Right ventricle myocardium superior (tissue), 1 donor: ENCODE measurements at regions of chr2 and their contacts with region 1.

Region 1: GRCh38 chr2:74482801-74483674 is at the starts of genes CCDC142 and TTC31:
- DNase-seq: peak; percentile 97
- ATAC-seq: peak; percentile 99
- total RNA-seq, gene CCDC142: 7.2 TPM
- total RNA-seq, gene TTC31: 8.4 TPM

Region 2: DNA sequence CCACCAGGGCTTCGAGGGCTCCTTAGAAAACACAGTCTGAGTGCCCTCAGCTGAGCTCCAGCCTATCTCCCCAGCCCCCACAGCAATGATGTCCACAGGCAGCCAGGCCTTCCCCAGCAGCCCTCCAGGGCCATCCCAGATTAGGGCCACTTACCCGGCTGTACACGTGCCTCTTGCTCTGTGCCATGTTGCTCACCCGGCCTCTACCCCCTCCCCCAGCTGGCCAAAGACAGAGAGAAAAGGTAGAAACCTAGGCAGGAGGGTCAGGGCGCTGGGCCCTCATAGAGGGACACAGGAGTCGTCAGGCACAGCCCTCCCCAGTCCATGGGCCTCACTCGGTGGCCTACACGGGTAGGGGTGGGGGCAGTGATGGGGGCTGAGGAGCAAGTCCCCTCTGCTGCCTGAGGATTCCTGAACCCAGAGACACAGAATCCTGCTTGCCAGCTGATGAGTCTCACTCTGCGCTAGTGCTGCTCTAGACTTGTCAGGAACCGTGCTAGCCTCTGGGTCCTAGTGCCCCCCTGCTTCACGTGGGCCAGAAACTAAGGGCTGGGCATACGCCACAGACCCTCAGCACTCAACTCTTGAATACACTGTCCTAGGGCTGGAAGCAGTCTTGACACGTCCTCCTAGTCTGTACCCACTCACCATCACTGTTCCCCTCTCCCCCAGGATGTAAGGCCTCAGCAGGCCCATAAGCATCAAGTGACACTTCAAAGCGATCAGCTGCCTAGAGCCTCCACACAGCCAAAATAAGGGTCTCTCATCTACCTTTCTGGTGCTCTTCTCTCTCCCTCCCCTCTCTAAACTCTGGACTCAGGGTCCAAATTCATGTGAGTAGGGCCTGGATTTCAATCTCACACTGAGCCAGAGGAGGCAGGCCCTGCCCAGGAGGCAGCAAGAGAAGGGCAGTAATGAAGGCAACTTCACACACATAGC is 102.9 kb before region 1 on chr2 and contains the start of gene DCTN1:
- intact Hi-C with region 1: no loop called
- DNase-seq: peak; percentile 63
- ATAC-seq: peak; percentile 81
- total RNA-seq, gene DCTN1: 149 TPM

Region 3: DNA sequence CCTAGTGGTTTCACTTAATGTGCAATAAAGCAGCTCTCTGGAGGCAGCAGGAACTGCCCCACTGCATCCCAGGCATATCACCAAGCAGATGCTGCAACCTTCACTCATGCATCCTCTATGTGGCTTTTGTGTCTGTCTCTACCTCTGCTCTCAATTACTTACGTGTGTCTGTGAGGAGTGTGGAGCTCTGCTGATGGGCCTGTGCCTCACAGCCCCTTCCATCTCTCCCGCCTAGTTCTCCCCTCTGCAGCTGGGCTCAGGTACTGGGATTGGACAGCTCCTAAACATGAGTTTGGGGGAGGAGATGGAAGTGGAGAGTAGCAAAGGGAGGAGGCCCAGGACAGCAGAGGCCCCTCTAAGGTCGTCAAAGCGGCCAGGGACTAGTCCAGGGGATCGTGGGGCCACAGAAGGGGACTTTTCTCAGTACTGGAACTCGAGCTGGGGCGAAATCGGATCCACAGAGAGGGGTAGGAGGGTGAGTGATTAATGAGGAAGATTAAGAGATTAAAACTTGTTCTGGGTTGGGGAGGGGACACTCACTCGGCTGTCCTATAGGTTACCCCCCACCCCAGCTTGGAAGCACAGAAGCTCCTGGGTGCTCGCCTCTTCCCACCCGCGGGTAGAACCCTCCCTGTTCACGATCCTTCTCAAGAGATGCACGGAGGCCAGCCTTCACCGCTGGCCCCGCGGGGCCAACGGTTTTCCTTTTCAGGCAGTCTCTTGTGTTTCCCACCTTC is 18.5 kb after region 1 on chr2:
- intact Hi-C with region 1: loop called (anchors 2 kb)
- DNase-seq: no peak
- ATAC-seq: no peak

Region 4: DNA sequence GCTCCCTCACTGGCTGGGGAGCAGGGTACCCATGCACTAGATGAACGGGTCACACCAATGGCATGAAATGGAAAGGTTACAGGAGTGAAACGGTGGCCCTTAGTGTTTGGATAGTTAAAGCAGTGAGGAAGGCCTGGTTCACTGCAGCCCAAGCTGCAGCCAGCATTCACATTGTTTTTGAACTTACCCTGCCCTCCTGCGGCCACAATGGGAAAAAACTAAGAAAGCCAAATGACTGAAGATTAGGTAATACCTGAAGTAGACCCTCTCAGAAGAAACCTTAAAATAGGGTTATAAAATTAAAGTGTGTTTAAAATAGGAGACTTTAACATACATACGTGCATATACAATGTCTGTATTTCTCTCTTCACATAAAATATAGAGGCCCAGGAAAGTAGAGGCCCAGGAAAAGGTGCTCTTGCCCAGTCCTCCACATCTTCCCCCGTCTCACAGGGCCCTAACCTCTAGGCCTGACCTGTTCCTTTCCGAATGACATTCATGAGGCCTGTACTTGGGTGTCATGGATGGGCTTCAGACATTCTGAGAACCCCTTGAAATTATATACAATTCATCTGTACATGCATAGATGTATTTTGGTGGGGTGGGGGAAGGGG is 104.7 kb after region 1 on chr2:
- intact Hi-C with region 1: loop called (anchors 5 kb)
- DNase-seq: peak; percentile 52
- ATAC-seq: peak; percentile 93